ENCODE measurements at regions of chr22 and their contacts with region 1.

Region 1: GRCh38 chr22:25623310-25623734 is 58.8 kb downstream of the GRK3 start:
- DNase-seq: no peak
- ATAC-seq: no peak
- H3K4me3 ChIP-seq: no peak overlapping the region
- H3K4me3 Mint-ChIP-seq: peak overlapping the region; percentile 30
- H3K27ac ChIP-seq: no peak overlapping the region
- H3K27ac Mint-ChIP-seq: peak overlapping the region; percentile 50
- H3K4me1 ChIP-seq: peaks cover 37 to 41% of the 10 kb centered on the region in 2 donors
- H3K4me1 Mint-ChIP-seq: peaks cover 64% of the 10 kb centered on the region
- H3K27me3 ChIP-seq: no peaks in the 10 kb centered on the region
- H3K27me3 Mint-ChIP-seq: no peaks in the 10 kb centered on the region
- CTCF ChIP-seq: no peak

Region 2: DNA sequence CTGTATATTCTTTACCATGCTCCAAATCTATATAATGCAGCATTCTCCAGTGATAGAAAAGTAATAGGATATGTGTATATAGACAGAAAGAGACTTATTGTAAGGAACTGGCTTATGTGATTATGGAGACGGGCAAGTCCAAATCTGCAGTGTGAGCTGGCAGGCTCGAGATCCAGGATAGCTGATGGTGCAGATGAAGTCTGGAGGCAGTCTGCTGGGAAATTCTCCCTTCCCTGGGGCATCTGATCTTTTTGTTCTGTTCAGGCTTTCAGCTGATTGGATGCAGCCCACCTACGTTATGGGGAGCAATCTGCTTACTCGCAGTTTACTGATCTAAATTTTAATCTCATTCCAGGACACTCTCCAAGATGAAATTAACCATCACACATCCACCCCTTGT is 14.3 kb after region 1 on chr22:
- CTCF ChIA-PET with region 1: interaction called, 5 read pairs
- POLR2A ChIA-PET with region 1: no interaction called
- intact Hi-C with region 1: loop called (anchors 1 kb)
- DNase-seq: no peak
- ATAC-seq: no peak
- H3K4me3 ChIP-seq: no peak overlapping the region
- H3K4me3 Mint-ChIP-seq: no peak overlapping the region
- H3K27ac ChIP-seq: no peak overlapping the region
- H3K27ac Mint-ChIP-seq: peak overlapping the region; percentile 34
- H3K4me1 ChIP-seq: peaks cover 1 to 3% of the 10 kb centered on the region in 2 donors
- H3K4me1 Mint-ChIP-seq: peaks cover 46% of the 10 kb centered on the region
- H3K27me3 ChIP-seq: no peaks in the 10 kb centered on the region
- H3K27me3 Mint-ChIP-seq: no peaks in the 10 kb centered on the region
- CTCF ChIP-seq: no peak

Region 3: DNA sequence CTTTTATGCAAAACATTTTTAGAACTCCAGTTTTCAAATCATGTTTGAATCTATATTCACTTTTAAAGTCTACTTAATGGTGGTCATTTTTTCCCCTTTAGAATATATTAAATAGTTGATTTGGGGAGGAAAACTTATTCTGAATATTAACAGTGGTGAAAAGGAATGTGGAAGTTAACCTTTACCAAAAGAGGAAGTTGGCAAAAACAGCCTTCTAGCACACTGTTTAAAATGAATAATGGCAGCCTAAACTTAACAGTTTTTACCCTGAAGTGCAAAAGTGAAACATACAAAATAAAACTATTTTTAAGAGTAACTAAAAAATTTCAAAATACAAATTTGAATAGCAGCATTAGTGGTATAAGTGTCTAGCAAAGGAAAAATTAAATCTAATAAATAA is 27.5 kb after region 1 on chr22:
- CTCF ChIA-PET with region 1: no interaction called
- POLR2A ChIA-PET with region 1: no interaction called
- intact Hi-C with region 1: loop called (anchors 2 kb)
- DNase-seq: peak; percentile 59
- ATAC-seq: peak; percentile 85
- H3K4me3 ChIP-seq: peak overlapping the region in 1 of 5 experiments; percentile 18
- H3K4me3 Mint-ChIP-seq: peak overlapping the region; percentile 71
- H3K27ac ChIP-seq: peak overlapping the region; percentile 53 to 68
- H3K27ac Mint-ChIP-seq: peak overlapping the region; percentile 81
- H3K4me1 ChIP-seq: peaks cover 21 to 27% of the 10 kb centered on the region in 2 donors
- H3K4me1 Mint-ChIP-seq: peaks cover 65% of the 10 kb centered on the region
- H3K27me3 ChIP-seq: no peaks in the 10 kb centered on the region
- H3K27me3 Mint-ChIP-seq: no peaks in the 10 kb centered on the region
- CTCF ChIP-seq: no peak

Region 4: GRCh38 chr22:26318975-26319374 is 695.7 kb after region 1 on chr22:
- CTCF ChIA-PET with region 1: no interaction called
- POLR2A ChIA-PET with region 1: no interaction called
- intact Hi-C with region 1: no loop called
- DNase-seq: no peak
- ATAC-seq: no peak
- H3K4me3 ChIP-seq: no peak overlapping the region
- H3K4me3 Mint-ChIP-seq: no peak overlapping the region
- H3K27ac ChIP-seq: no peak overlapping the region
- H3K27ac Mint-ChIP-seq: no peak overlapping the region
- H3K4me1 ChIP-seq: no peaks in the 10 kb centered on the region
- H3K4me1 Mint-ChIP-seq: no peaks in the 10 kb centered on the region
- H3K27me3 ChIP-seq: peaks cover 0 to 8% (median 1%) of the 10 kb centered on the region in 4 experiments
- H3K27me3 Mint-ChIP-seq: peaks cover 49% of the 10 kb centered on the region
- CTCF ChIP-seq: no peak